OCI-LY7 (cell line): ENCODE measurements at regions of chr7 and their contacts with region 1.

Region 1: DNA sequence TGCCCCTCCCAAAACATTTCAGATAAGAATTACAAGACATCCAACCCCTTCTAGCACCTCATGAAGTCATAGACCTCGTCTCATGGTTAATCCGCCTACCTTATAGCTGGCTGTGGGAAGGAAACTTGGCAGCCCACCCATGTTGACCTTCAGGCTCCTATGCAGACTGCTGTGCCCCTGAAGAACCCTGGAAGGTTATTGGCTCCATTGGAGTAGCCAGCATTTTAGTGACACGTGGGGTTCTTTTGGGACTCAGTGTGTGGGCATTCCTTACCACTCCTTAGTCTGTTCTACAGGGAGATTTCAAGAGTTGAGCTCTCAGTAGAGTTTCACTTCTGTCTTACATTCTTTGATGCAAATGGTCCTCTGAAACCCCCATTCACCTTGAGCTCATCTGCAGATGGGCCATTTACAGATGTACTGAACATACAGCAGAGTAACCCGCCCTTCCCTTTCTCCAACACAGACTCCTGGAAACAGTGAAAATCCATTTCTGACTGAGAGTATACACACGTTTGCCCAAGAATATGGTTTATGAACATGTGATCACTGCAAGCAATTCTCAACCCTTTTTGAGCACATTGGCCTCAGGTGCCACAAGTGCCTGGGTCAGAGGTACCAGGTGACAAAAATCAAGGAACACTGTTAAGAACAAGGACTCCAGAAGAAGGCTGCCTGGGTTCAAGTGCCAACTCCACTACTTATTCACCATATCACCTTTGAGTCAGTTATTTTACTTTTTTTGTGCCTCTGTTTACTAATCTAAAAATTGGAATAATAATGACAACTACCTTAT is 54.0 kb upstream of the HECW1 start:
- DNase-seq: peak; percentile 82
- H3K4me3 ChIP-seq: peak overlapping the region; percentile 36
- H3K27ac ChIP-seq: peak overlapping the region; percentile 97
- H3K4me1 ChIP-seq: peaks cover 52% of the 10 kb centered on the region
- CTCF ChIP-seq: no peak

Region 2: GRCh38 chr7:43071604-43072003 is 13.1 kb after region 1 on chr7:
- CTCF ChIA-PET with region 1: interaction called, 4 read pairs
- POLR2A ChIA-PET with region 1: interaction called, 71 read pairs
- intact Hi-C with region 1: loop called (anchors 1 kb)
- DNase-seq: peak; percentile 73
- H3K4me3 ChIP-seq: peak overlapping the region; percentile 44
- H3K27ac ChIP-seq: peak overlapping the region; percentile 98
- H3K4me1 ChIP-seq: peaks cover 79% of the 10 kb centered on the region
- CTCF ChIP-seq: peak; percentile 85

Region 3: DNA sequence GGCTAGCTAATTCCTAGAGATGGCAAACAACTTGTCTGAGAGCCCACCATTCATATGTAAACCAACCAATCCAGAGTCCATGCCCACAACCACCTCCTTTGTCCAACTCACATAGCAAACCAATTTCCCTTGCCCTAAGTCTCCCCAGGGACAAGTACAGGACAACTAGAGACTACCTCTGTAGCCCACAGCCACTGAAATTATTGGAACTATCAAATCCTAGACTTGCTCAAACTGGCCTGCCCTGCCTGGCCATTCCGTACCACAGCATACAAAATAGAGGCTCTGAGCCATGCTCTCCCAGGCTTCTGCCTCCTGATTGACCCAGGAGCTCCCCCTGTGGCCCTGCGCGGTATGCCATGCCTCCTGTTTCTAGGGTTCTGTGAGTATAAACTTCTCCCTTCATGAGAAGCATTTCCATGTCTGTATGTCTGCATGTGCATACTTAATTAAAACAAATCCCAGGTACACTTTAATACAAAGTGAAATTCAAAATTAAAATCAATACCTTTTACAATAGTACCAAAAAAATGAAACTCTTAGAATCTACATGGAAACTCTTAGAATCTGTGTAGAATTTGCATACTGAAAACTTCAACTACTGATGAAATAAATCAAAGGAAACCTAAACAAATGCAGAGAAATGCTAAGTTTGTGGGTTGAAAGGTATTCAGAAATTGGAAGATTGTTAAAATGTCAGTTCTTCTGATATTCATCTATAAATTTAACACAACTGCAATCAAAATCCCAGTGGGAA is 50.0 kb after region 1 on chr7:
- CTCF ChIA-PET with region 1: no interaction called
- POLR2A ChIA-PET with region 1: interaction called, 3 read pairs
- intact Hi-C with region 1: loop called (anchors 5 kb)
- DNase-seq: peak; percentile 75
- H3K4me3 ChIP-seq: no peak overlapping the region
- H3K27ac ChIP-seq: no peak overlapping the region
- H3K4me1 ChIP-seq: peaks cover 45% of the 10 kb centered on the region
- CTCF ChIP-seq: peak; percentile 94

Region 4: DNA sequence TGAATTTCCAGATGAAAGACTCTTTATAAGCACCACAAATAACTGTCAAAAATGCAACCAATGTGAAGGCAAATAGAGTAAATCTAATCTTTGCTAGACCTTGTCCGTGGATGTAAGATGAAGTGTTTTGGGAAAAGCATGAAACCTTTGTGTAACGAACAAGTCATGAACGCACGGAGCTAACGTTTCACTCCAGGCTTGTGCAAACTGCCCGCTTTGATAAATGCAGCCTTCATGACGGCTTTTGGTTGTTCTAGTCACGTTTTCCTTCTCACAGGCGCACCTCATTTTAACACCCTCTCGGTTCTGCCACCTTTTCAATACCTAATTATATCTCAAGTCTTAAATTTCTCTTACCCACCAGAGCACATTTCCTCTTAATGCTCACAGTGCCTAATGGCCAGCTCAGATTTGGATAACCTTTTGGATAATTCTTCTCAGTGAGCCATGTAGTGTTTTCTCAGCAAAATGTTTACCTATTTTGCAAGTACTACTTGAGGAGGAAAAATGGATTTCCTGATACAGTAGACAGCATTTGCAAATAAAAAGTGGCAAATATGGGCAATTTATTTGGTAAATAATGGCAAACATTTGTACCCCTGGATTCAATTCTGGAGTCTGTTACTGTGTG is 117.2 kb after region 1 on chr7:
- CTCF ChIA-PET with region 1: no interaction called
- POLR2A ChIA-PET with region 1: no interaction called
- intact Hi-C with region 1: no loop called
- DNase-seq: no peak
- H3K4me3 ChIP-seq: no peak overlapping the region
- H3K27ac ChIP-seq: no peak overlapping the region
- H3K4me1 ChIP-seq: no peaks in the 10 kb centered on the region
- CTCF ChIP-seq: no peak